IMR-90 (cell line): ENCODE measurements at regions of chr1 and their contacts with region 1.

Region 1: DNA sequence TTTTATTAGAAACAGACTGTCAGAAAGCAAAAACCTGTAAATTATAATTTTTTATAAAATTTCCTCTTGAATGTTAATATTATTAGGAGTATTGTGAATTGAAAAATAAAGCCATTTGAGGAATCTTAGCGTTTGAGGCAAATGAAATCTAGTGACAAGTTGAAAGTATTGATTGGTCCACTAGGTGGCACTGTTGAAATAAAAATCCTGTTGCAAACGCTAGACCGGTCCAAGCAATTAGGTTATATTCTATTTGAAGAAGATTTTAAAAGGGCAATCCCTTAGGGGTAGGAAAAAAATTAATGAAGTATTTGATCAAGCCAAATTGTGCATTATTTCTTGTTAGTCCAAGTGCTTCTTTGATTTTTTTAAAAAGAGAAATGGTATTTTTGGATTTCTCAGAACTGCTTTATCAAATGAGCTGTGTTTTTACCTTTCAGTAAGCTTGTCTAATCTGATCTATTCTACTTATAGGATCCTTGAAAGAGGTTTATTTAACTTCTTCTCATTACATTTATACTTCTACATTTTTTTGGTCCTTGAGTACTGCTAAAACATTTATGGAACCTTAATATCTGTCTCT is 57.7 kb downstream of the ATG4C start:
- DNase-seq: peak; percentile 75
- ATAC-seq: peak; percentile 83
- H3K4me3 ChIP-seq: no peak overlapping the region
- H3K27ac ChIP-seq: no peak overlapping the region
- H3K4me1 ChIP-seq: no peaks in the 10 kb centered on the region
- H3K27me3 ChIP-seq: no peaks in the 10 kb centered on the region
- CTCF ChIP-seq: peak; percentile 71
- POLR2A ChIP-seq: no peak
- RAD21 ChIP-seq: peak; percentile 77

Region 2: DNA sequence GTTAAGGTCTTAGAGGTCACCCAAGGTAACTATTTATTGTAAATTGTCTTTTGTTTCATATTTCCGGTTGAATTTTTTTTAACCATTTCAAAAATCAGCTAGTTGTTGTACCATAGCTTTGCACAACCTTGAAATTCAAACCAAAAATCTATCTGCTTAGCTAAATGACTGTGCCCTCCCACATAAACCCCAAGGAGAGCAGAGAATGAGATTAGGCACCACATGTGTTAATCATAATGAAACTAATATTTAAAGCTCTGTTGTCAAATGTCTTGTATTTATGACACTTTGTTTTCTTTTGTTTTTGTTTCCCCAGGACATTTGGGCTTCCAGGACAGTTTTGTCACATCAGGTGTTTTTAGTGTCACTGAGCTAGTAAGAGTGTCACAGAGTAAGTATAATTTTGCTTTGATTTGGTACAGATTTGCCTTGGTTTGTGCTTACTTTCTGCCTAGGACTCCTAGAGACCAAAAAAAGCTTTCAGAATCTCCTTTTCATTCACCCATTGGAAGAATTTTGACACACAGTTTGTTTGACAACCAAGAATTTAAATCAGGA is 1509.4 kb before region 1 on chr1:
- CTCF ChIA-PET with region 1: no interaction called
- POLR2A ChIA-PET with region 1: no interaction called
- dilution Hi-C with region 1: no loop called
- in situ Hi-C with region 1: no loop called
- intact Hi-C with region 1: no loop called
- DNase-seq: no peak
- ATAC-seq: no peak
- H3K4me3 ChIP-seq: no peak overlapping the region
- H3K27ac ChIP-seq: no peak overlapping the region
- H3K4me1 ChIP-seq: no peaks in the 10 kb centered on the region
- H3K27me3 ChIP-seq: peaks cover 18% of the 10 kb centered on the region
- CTCF ChIP-seq: no peak
- POLR2A ChIP-seq: no peak
- RAD21 ChIP-seq: no peak

Region 3: GRCh38 chr1:62906428-62906886 is 64.8 kb after region 1 on chr1:
- CTCF ChIA-PET with region 1: interaction called, 7 read pairs
- POLR2A ChIA-PET with region 1: no interaction called
- dilution Hi-C with region 1: no loop called
- in situ Hi-C with region 1: no loop called
- intact Hi-C with region 1: loop called (anchors 1 kb)
- DNase-seq: peak; percentile 11
- ATAC-seq: peak; percentile 21; the same call in 1 of the 2 replicates
- H3K4me3 ChIP-seq: no peak overlapping the region
- H3K27ac ChIP-seq: no peak overlapping the region
- H3K4me1 ChIP-seq: no peaks in the 10 kb centered on the region
- H3K27me3 ChIP-seq: peaks cover 4% of the 10 kb centered on the region
- CTCF ChIP-seq: peak; percentile 47
- POLR2A ChIP-seq: no peak
- RAD21 ChIP-seq: no peak

Region 4: DNA sequence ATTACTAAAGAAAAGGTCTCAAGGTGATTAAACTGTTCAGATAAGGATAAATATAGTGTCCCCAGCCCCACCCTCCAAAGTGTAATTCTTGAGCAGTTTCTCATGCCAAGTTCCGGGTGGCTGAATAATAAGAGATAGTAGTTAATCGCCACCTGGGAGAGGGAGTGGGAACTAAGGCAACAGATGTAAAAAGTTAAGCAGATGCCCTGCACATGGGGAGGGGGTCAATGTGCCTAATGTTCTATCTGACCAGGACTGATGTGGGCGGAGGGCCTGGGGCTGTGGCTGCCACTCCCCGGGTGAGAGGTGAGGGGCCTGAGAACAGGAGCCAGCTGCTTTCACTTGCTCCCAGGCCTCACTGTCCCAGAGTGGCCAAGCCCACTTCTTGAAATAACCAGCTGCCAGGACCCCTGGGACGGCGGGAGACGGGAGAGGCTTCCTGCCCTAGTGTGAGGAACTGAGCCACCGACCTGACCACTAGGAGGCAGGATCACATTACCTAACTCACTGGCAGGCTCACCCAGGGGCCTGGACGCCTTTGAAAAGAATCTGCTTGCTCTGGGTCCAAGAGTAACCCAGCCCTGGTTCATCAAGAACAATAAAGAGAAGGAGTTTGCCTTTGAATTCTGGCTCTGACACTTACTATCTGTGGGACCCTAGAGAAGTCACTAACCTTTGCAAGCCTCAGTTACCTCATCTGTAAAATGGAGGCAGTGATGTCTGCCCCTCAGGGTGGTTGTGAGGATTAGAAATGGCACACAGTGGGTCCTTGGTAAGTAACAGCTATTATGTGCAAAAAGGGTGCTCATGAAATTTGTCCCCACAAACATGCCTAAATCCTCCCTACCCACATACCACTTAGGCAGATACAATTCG is 121.5 kb after region 1 on chr1:
- CTCF ChIA-PET with region 1: no interaction called
- POLR2A ChIA-PET with region 1: no interaction called
- dilution Hi-C with region 1: no loop called
- in situ Hi-C with region 1: no loop called
- intact Hi-C with region 1: loop called (anchors 10 kb)
- DNase-seq: peak; percentile 14
- ATAC-seq: peak; percentile 73
- H3K4me3 ChIP-seq: no peak overlapping the region
- H3K27ac ChIP-seq: no peak overlapping the region
- H3K4me1 ChIP-seq: no peaks in the 10 kb centered on the region
- H3K27me3 ChIP-seq: no peaks in the 10 kb centered on the region
- CTCF ChIP-seq: peak; percentile 46
- POLR2A ChIP-seq: no peak
- RAD21 ChIP-seq: peak; percentile 47; the same call in 1 of the 2 replicates

Region 5: GRCh38 chr1:63082773-63083172 is 241.1 kb after region 1 on chr1:
- CTCF ChIA-PET with region 1: no interaction called
- POLR2A ChIA-PET with region 1: no interaction called
- dilution Hi-C with region 1: no loop called
- in situ Hi-C with region 1: no loop called
- intact Hi-C with region 1: no loop called
- DNase-seq: no peak
- ATAC-seq: no peak
- H3K4me3 ChIP-seq: no peak overlapping the region
- H3K27ac ChIP-seq: no peak overlapping the region
- H3K4me1 ChIP-seq: no peaks in the 10 kb centered on the region
- H3K27me3 ChIP-seq: no peaks in the 10 kb centered on the region
- CTCF ChIP-seq: no peak
- POLR2A ChIP-seq: no peak
- RAD21 ChIP-seq: no peak

Region 6: DNA sequence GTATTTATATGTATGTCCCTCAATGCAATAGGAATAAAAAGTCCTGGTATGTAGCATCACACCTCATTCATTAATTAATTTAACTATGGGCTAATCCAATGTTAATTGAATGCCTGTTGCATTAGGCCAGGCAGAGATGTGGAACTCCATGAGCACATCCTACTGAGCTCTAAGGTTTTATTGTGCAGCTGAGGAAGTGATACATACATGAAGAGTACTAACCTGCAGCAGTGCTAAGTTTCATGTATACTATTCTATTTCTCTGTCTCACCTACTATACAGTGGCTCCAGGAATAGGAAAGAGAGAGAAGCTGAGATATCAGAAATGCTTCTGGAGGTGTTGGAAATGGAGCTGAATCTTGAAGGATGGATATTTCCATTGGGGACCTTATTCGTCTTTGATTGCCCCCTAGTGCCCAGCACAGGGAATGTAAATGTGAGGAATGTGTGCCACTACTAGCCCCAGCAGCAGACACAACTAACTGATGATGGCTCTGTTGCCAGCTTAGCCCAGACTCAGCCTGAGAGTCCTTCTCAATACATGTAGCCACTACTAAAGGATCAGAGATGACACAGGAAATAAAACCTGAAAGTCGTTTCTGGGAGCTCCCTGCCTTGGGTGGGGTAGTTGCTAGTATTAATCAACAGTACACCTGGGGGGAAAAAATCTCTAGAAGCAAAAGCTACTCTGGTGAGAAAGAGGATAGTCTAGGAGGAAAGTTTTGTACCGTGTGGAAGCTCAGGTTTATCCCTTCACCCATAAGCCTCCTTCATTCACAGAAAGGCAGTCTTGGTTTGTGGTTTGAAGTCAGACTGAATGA is 307.4 kb after region 1 on chr1:
- CTCF ChIA-PET with region 1: interaction called, 12 read pairs
- POLR2A ChIA-PET with region 1: no interaction called
- dilution Hi-C with region 1: no loop called
- in situ Hi-C with region 1: no loop called
- intact Hi-C with region 1: loop called (anchors 1 kb)
- DNase-seq: peak; percentile 31
- ATAC-seq: peak; percentile 71
- H3K4me3 ChIP-seq: no peak overlapping the region
- H3K27ac ChIP-seq: no peak overlapping the region
- H3K4me1 ChIP-seq: no peaks in the 10 kb centered on the region
- H3K27me3 ChIP-seq: no peaks in the 10 kb centered on the region
- CTCF ChIP-seq: peak; percentile 61
- POLR2A ChIP-seq: no peak
- RAD21 ChIP-seq: peak; percentile 58

Region 7: DNA sequence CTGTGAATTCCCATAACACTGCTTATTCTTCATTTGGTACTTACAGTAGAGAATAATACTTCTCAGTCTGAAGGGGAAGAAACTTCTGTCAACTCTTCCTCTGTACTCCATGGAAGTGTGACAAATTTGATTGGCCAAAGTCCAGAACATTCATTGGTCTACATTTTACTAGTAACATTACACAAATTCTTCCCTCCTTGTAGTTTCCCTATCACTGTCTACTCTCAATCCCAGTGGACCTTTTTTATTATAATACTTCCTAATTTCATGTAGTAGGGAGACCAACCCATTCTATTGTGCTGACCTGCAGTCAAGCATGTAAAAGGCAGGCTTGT is 600.4 kb after region 1 on chr1:
- CTCF ChIA-PET with region 1: no interaction called
- POLR2A ChIA-PET with region 1: no interaction called
- dilution Hi-C with region 1: no loop called
- in situ Hi-C with region 1: loop called (anchors 25 kb)
- intact Hi-C with region 1: loop called (anchors 2 kb)
- DNase-seq: peak; percentile 12
- ATAC-seq: peak; percentile 18; the same call in 1 of the 2 replicates
- H3K4me3 ChIP-seq: no peak overlapping the region
- H3K27ac ChIP-seq: no peak overlapping the region
- H3K4me1 ChIP-seq: peaks cover 2% of the 10 kb centered on the region; the same call in 1 of the 2 replicates
- H3K27me3 ChIP-seq: no peaks in the 10 kb centered on the region
- CTCF ChIP-seq: no peak
- POLR2A ChIP-seq: no peak
- RAD21 ChIP-seq: no peak

Region 8: GRCh38 chr1:63537940-63538339 is 696.3 kb after region 1 on chr1:
- CTCF ChIA-PET with region 1: no interaction called
- POLR2A ChIA-PET with region 1: no interaction called
- dilution Hi-C with region 1: no loop called
- in situ Hi-C with region 1: loop called (anchors 25 kb)
- intact Hi-C with region 1: loop called (anchors 5 kb)
- DNase-seq: peak; percentile 15
- ATAC-seq: peak; percentile 66
- H3K4me3 ChIP-seq: no peak overlapping the region
- H3K27ac ChIP-seq: no peak overlapping the region
- H3K4me1 ChIP-seq: peaks cover 1% of the 10 kb centered on the region; the same call in 1 of the 2 replicates
- H3K27me3 ChIP-seq: no peaks in the 10 kb centered on the region
- CTCF ChIP-seq: peak; percentile 55
- POLR2A ChIP-seq: no peak
- RAD21 ChIP-seq: peak; percentile 60